HepG2 (cell line): ENCODE measurements at regions of chr6 and their contacts with region 1.

Region 1: DNA sequence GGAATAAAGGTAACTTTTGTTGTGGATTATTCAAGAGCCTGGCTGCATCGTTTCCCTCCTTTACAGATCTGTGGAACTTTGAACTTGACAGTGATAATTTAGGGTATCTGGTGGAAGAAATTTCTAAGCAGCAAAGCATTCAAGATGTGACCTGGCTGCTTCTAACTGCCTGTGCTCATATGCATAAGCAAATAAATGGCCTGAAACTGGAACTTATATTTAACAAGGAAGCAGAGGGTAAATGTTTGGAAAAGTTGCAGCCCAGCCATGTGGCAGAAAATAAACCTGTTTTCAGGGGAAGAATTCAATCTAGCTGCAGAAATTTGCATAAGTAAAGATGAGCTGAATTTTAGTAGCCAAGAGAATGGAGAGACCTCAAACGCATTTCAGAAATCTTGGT is 173.5 kb downstream of the C6orf118 start:
- DNase-seq: no peak
- ATAC-seq: no peak
- H3K4me3 ChIP-seq: no peak overlapping the region
- H3K27ac ChIP-seq: no peak overlapping the region
- H3K4me1 ChIP-seq: no peaks in the 10 kb centered on the region
- H3K27me3 ChIP-seq: no peaks in the 10 kb centered on the region
- CTCF ChIP-seq: no peak
- EP300 ChIP-seq: no peak
- POLR2A ChIP-seq: no peak
- RAD21 ChIP-seq: no peak

Region 2: DNA sequence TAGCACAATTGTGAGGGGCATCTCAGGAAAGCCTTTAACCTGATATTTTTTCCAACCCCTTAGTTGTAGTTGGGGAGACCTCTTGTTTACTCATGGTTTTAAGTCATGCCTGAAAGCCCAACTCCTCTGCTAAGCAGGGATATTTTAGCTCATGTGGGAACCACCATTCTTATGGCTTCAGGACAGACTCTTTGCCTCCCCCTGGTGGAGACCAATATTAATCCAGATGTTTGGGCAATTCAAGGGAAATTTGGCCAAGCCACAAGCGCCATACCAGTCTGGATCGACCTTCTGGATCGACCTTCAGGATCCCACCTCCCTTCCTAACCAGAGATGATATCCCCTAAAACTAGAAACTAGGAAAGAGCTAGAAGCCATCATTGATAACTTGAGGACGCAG is 37.7 kb before region 1 on chr6:
- CTCF ChIA-PET with region 1: no interaction called
- POLR2A ChIA-PET with region 1: no interaction called
- in situ Hi-C with region 1: no loop called
- intact Hi-C with region 1: no loop called
- DNase-seq: no peak
- ATAC-seq: no peak
- H3K4me3 ChIP-seq: no peak overlapping the region
- H3K27ac ChIP-seq: no peak overlapping the region
- H3K4me1 ChIP-seq: no peaks in the 10 kb centered on the region
- H3K27me3 ChIP-seq: no peaks in the 10 kb centered on the region
- CTCF ChIP-seq: no peak
- EP300 ChIP-seq: no peak
- POLR2A ChIP-seq: no peak
- RAD21 ChIP-seq: no peak

Region 3: GRCh38 chr6:165181951-165182414 is 46.1 kb after region 1 on chr6:
- CTCF ChIA-PET with region 1: no interaction called
- POLR2A ChIA-PET with region 1: no interaction called
- in situ Hi-C with region 1: no loop called
- intact Hi-C with region 1: loop called (anchors 1 kb)
- DNase-seq: no peak
- ATAC-seq: no peak
- H3K4me3 ChIP-seq: no peak overlapping the region
- H3K27ac ChIP-seq: no peak overlapping the region
- H3K4me1 ChIP-seq: no peaks in the 10 kb centered on the region
- H3K27me3 ChIP-seq: no peaks in the 10 kb centered on the region
- CTCF ChIP-seq: no peak
- EP300 ChIP-seq: no peak
- POLR2A ChIP-seq: no peak
- RAD21 ChIP-seq: no peak

Region 4: DNA sequence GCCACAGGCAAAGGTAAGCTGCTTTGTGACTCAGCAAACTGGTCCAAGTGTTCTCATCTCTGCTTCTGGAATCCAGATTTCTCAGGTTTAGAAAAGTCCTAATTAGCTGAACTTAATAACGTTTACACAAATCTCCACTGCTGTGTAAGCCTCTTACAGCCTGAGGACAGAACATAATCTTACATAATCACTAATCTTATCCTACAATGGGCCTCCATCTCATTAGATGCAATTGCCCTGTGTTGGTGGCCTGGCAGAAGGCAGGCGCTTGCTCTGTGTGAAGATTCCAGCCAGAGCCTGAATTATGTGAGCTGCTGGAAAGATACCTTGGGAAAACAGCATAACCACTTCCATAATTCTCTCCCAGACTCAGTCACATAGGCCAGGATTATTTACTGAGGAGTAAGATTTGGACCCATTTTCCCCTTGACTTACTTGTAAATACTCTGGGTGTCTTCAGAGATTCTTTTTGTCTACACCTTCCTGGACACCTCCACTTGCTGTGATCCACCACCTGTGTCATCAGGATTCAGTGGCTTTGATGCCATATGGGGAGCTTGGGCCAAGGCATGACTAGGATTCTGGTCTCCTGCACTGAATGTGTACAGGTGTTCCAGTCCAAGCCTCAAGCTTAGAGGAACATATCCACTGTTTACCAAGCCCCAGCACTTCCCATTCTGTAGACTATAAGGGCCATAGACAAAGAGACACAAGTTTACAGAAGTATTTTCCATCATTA is 69.1 kb after region 1 on chr6:
- CTCF ChIA-PET with region 1: no interaction called
- POLR2A ChIA-PET with region 1: no interaction called
- in situ Hi-C with region 1: no loop called
- intact Hi-C with region 1: no loop called
- DNase-seq: no peak
- ATAC-seq: no peak
- H3K4me3 ChIP-seq: no peak overlapping the region
- H3K27ac ChIP-seq: no peak overlapping the region
- H3K4me1 ChIP-seq: no peaks in the 10 kb centered on the region
- H3K27me3 ChIP-seq: no peaks in the 10 kb centered on the region
- CTCF ChIP-seq: no peak
- EP300 ChIP-seq: no peak
- POLR2A ChIP-seq: no peak
- RAD21 ChIP-seq: no peak